Dorsolateral prefrontal cortex (tissue), 120 donors: ENCODE measurements at regions of chr5 and their contacts with region 1.

Region 1: DNA sequence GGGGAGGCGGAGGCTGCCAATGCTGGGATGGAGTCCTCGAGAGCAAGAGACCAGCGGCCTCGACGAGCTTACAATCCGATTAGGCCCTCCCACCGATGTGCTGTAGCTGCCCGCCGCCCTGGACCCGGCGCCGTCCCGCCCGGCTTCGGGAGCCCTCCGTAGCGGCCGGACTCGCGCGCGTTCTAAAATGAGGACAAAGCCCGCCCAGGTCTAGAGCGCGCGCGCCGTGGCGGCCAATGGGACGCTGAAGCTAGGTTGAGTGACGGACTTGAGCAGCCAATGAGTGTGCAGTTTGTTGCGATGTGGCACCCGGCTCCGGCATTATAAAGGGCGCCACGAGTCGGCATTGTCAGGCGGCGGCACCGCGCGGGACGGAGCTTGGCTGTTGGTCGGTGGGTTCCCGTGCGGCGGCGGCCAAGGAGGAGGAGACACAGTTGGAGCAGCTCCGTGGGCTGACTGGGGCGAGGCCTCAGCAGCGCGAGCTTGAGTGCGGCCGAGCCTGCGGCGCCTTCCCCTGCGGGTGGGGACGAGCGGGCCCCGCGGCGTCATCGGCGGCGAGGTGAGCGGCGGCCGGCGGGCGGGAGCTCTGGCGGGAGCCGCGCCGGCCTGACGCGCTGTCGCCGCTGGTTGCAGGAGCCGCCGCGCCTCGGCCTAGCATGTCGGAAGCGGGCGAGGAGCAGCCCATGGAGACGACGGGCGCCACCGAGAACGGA is at the start of gene HNRNPAB:
- DNase-seq: peak; percentile 95 to 97 (median 96)
- H3K4me3 ChIP-seq: peak within 1 kb of the TSS; percentile 56 to 99 (median 86)
- H3K27ac ChIP-seq: peak within 1 kb of the TSS in 55 of 59 donors; percentile 31 to 93 (median 78)
- H3K27me3 ChIP-seq: no peaks in the 10 kb centered on the region
- CTCF ChIP-seq: peak in 15 of 56 donors; percentile 0 to 55 (median 28)
- total RNA-seq, gene HNRNPAB: 27.5 to 66.1 (median 44.7) TPM

Region 2: GRCh38 chr5:178163772-178164735 is 40.3 kb before region 1 on chr5:
- intact Hi-C with region 1: loop called in 1 of 2 experiments (anchors 5 kb)
- DNase-seq: peak; percentile 69 to 91 (median 79)
- H3K4me3 ChIP-seq: peak overlapping the region in 56 of 59 donors; percentile 10 to 65 (median 40)
- H3K27ac ChIP-seq: peak overlapping the region in 1 of 59 donors; percentile 28
- H3K27me3 ChIP-seq: peaks cover 0 to 19% (median 5%) of the 10 kb centered on the region in 45 donors
- CTCF ChIP-seq: peak; percentile 87 to 99 (median 98)

Region 3: DNA sequence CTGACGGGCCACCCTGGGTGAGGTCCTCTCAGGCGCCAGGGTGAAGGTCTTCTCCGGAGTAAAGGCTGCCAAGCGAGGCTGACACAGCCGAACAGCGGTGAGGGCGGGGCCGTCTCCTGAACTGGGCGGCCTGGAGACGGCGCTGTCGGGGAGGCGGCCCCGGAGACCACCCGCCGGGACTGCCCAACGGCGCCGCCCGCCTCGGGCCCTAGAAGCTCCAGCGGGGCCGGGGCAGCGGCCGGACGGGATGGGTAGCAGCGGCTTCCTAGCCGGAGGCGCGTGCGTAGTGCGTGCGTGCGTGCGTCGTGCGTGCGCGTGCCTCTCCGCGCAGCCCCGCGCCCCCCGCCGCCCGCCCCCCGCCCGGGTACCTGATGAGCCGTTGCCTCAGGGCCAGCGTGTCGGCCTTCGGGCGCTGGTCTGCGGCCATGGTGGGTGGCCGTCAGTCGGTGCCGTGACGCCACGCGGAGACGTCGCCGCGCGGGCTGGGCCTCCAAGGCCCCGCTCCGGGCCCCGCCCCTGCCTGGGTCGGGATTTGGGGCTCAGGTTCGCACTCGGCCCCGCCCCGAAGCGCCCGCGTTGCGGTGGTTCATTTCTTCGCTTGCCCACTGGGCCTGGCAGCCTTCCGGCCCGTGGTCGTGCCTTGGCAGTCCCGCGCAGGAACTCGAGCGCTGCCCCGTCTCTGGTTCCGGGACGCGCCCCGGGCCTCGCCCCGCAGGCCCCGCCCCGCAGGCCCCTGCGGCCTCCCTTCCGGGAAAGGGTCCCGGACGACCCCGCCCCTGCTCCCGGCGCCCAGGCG is 28.0 kb after region 1 on chr5 and contains the start of gene PHYKPL:
- intact Hi-C with region 1: loop called (anchors 1 to 2 kb)
- DNase-seq: peak; percentile 42 to 81 (median 62)
- H3K4me3 ChIP-seq: peak within 1 kb of the TSS; percentile 44 to 97 (median 90)
- H3K27ac ChIP-seq: peak within 1 kb of the TSS; percentile 58 to 99 (median 96)
- H3K27me3 ChIP-seq: no peaks in the 10 kb centered on the region
- CTCF ChIP-seq: peak in 25 of 56 donors; percentile 6 to 44 (median 20)
- total RNA-seq, gene PHYKPL: 36.8 to 114 (median 63.2) TPM